CD4-positive, alpha-beta memory T cell (primary cell): ENCODE measurements at regions of chr15 and their contacts with region 1.

Region 1: GRCh38 chr15:101294731-101295606 is at the start of gene SNRPA1:
- DNase-seq: peak; percentile 94 to 97 (median 95)
- H3K4me3 ChIP-seq: peak within 1 kb of the TSS; percentile 93 to 96
- H3K4me3 Mint-ChIP-seq: peak within 1 kb of the TSS; percentile 93 to 99 (median 96)
- H3K27ac ChIP-seq: peak within 1 kb of the TSS; percentile 94
- H3K27ac Mint-ChIP-seq: peak within 1 kb of the TSS; percentile 89 to 99 (median 98)
- H3K4me1 ChIP-seq: peaks cover 47% of the 10 kb centered on the region
- H3K4me1 Mint-ChIP-seq: peaks cover 26 to 57% (median 39%) of the 10 kb centered on the region in 4 donors
- H3K27me3 ChIP-seq: no peaks in the 10 kb centered on the region
- H3K27me3 Mint-ChIP-seq: no peaks in the 10 kb centered on the region
- total RNA-seq, gene SNRPA1: 90.5 to 100 TPM

Region 2: DNA sequence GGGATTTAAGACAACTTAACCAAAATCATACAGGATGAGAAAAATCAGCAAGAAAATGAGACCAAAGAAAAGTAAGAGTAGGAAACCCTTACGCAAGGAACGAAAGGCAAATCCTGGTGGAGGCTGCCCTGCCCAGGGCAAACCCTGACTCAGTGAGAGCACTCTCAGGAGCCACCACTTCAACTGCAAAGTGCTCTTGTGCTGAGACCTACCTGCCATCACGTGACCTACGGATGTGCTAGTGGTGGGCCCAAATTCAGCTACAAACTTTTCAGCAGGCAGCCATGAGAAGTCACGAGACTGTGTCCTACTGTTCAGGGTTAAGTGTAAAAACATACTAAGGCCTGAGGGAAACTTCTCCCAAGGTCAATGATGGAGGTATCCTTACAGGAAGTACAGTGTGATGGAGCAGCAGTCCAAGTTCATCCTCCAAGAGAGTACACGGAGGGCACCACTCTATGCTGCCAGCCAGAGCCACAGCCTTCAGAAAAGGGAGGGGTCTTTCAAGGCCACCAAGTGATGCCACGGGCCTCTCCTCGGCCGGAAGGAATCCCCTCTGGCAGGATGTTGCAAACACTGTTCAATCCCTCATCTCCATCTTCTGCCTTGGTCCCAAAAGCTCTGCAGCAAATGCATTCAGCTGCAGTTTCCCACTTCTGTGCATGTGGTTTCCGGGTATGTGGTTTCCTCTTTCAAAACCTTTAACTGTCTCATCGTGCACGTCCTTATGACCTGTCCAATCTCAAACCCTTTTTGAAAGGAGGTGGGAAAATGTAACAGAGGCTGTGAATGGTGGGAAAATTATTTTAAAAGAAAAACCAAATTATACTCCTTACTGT is 52.6 kb before region 1 on chr15:
- CTCF ChIA-PET with region 1: interaction called, 4 read pairs
- POLR2A ChIA-PET with region 1: interaction called, 15 read pairs
- intact Hi-C with region 1: no loop called
- DNase-seq: peak; percentile 78 to 88 (median 80)
- H3K4me3 ChIP-seq: peak overlapping the region in 1 of 2 donors; percentile 57
- H3K4me3 Mint-ChIP-seq: peak overlapping the region; percentile 64 to 89 (median 80)
- H3K27ac ChIP-seq: peak overlapping the region; percentile 49
- H3K27ac Mint-ChIP-seq: peak overlapping the region; percentile 82 to 97 (median 89)
- H3K4me1 ChIP-seq: peaks cover 87% of the 10 kb centered on the region
- H3K4me1 Mint-ChIP-seq: peaks cover 67 to 96% (median 78%) of the 10 kb centered on the region in 4 donors
- H3K27me3 ChIP-seq: no peaks in the 10 kb centered on the region
- H3K27me3 Mint-ChIP-seq: no peaks in the 10 kb centered on the region

Region 3: GRCh38 chr15:101269479-101270223 is 25.3 kb before region 1 on chr15:
- CTCF ChIA-PET with region 1: interaction called, 27 read pairs
- POLR2A ChIA-PET with region 1: interaction called, 10 read pairs
- intact Hi-C with region 1: no loop called
- DNase-seq: no peak
- H3K4me3 ChIP-seq: no peak overlapping the region
- H3K4me3 Mint-ChIP-seq: no peak overlapping the region
- H3K27ac ChIP-seq: no peak overlapping the region
- H3K27ac Mint-ChIP-seq: peak overlapping the region in 3 of 7 donors; percentile 36 to 51 (median 43)
- H3K4me1 ChIP-seq: no peaks in the 10 kb centered on the region
- H3K4me1 Mint-ChIP-seq: peaks cover 0 to 6% (median 0%) of the 10 kb centered on the region in 4 donors
- H3K27me3 ChIP-seq: no peaks in the 10 kb centered on the region
- H3K27me3 Mint-ChIP-seq: no peaks in the 10 kb centered on the region

Region 4: GRCh38 chr15:101320501-101321052 is 25.6 kb after region 1 on chr15:
- CTCF ChIA-PET with region 1: interaction called, 23 read pairs
- POLR2A ChIA-PET with region 1: interaction called, 56 read pairs
- intact Hi-C with region 1: loop called (anchors 1 kb)
- DNase-seq: peak; percentile 51 to 67 (median 64)
- H3K4me3 ChIP-seq: peak overlapping the region; percentile 19 to 34
- H3K4me3 Mint-ChIP-seq: peak overlapping the region; percentile 72 to 89 (median 86)
- H3K27ac ChIP-seq: no peak overlapping the region
- H3K27ac Mint-ChIP-seq: peak overlapping the region; percentile 41 to 96 (median 87)
- H3K4me1 ChIP-seq: peaks cover 11% of the 10 kb centered on the region
- H3K4me1 Mint-ChIP-seq: peaks cover 6 to 14% (median 10%) of the 10 kb centered on the region in 4 donors
- H3K27me3 ChIP-seq: no peaks in the 10 kb centered on the region
- H3K27me3 Mint-ChIP-seq: peaks cover 3 to 5% of the 10 kb centered on the region in 2 donors

Region 5: DNA sequence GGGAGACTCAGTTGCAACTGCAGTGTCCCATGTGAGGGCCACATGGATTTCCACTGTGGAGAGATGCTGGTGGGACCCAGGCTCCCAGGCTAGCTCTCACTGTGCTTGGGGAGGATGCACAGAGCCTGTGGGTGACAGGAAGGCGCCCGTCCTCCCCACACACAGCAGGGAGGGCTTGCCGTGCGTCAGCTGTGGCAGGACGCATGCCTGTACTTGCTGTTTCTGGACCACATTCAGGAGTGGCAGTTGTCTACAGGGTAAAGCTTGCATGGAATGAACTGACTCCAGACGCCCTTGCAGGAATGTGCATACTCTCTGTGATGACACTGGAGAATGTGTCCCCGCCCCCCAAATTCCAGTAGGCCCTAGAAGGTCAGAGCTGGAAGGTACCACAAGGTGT is 63.9 kb after region 1 on chr15:
- CTCF ChIA-PET with region 1: no interaction called
- POLR2A ChIA-PET with region 1: no interaction called
- intact Hi-C with region 1: no loop called
- DNase-seq: no peak
- H3K4me3 ChIP-seq: no peak overlapping the region
- H3K4me3 Mint-ChIP-seq: no peak overlapping the region
- H3K27ac ChIP-seq: no peak overlapping the region
- H3K27ac Mint-ChIP-seq: no peak overlapping the region
- H3K4me1 ChIP-seq: no peaks in the 10 kb centered on the region
- H3K4me1 Mint-ChIP-seq: no peaks in the 10 kb centered on the region
- H3K27me3 ChIP-seq: no peaks in the 10 kb centered on the region
- H3K27me3 Mint-ChIP-seq: peaks cover 14 to 17% of the 10 kb centered on the region in 2 donors

Region 6: DNA sequence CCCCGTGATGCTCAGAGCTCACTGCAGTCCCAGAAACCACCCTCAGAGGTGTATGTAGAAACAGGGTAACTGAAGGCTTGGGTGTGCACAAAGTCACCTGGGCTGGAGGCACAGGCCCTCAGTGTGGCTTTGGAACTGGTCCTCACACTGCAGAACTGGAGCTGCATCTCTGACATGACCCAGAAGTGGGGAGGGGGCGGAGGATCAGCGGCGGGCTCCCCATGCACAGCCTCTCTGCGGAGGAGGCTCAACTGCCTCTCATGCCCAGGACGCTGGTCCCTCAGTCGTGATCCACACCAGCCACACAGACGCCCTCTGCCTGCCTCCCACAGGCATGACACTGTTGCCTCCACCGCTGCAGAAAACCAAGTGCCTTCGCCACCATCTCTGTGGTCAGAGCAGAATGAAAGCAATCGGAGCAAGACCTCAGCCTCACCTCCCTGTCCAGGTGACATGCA is 283.5 kb after region 1 on chr15:
- CTCF ChIA-PET with region 1: no interaction called
- POLR2A ChIA-PET with region 1: no interaction called
- intact Hi-C with region 1: no loop called
- DNase-seq: peak in 1 of 5 donors; percentile 1
- H3K4me3 ChIP-seq: no peak overlapping the region
- H3K4me3 Mint-ChIP-seq: no peak overlapping the region
- H3K27ac ChIP-seq: no peak overlapping the region
- H3K27ac Mint-ChIP-seq: no peak overlapping the region
- H3K4me1 ChIP-seq: no peaks in the 10 kb centered on the region
- H3K4me1 Mint-ChIP-seq: no peaks in the 10 kb centered on the region
- H3K27me3 ChIP-seq: no peaks in the 10 kb centered on the region
- H3K27me3 Mint-ChIP-seq: peaks cover 22 to 48% of the 10 kb centered on the region in 2 donors

Region 7: DNA sequence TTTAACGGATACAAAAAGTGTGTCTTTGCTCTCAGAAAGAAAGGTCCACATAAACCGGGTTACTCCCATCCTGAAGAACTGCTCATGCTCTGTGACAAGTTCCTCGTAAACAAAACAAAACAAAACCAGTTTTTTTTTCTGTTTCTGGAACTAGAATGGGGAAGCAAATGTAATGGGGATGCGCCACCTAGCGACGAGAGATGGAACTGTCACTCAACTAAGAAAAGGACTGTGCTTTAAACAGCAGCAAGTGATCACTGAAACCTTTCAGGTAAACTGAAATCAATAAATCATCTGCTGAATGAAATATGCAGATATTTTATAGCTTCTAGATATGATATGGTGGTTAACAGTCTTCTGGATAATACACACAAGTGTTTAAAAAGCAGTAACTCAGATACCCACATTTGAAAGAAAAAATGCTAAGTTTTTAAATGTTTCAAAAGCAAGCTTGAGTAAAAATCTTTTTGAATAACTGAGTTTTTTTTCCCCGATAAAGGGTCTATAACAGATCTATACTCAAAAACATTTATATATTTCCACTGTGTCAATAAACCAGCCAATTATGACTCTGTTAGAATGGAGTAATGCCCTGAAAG is 346.3 kb after region 1 on chr15:
- CTCF ChIA-PET with region 1: interaction called, 50 read pairs
- POLR2A ChIA-PET with region 1: interaction called, 13 read pairs
- intact Hi-C with region 1: loop called (anchors 1 kb)
- DNase-seq: peak; percentile 73 to 78 (median 77)
- H3K4me3 ChIP-seq: no peak overlapping the region
- H3K4me3 Mint-ChIP-seq: peak overlapping the region in 5 of 8 donors; percentile 4 to 52 (median 18)
- H3K27ac ChIP-seq: peak overlapping the region; percentile 67
- H3K27ac Mint-ChIP-seq: peak overlapping the region; percentile 80 to 95 (median 94)
- H3K4me1 ChIP-seq: peaks cover 25% of the 10 kb centered on the region
- H3K4me1 Mint-ChIP-seq: peaks cover 20 to 30% (median 25%) of the 10 kb centered on the region in 4 donors
- H3K27me3 ChIP-seq: no peaks in the 10 kb centered on the region
- H3K27me3 Mint-ChIP-seq: no peaks in the 10 kb centered on the region

Region 8: DNA sequence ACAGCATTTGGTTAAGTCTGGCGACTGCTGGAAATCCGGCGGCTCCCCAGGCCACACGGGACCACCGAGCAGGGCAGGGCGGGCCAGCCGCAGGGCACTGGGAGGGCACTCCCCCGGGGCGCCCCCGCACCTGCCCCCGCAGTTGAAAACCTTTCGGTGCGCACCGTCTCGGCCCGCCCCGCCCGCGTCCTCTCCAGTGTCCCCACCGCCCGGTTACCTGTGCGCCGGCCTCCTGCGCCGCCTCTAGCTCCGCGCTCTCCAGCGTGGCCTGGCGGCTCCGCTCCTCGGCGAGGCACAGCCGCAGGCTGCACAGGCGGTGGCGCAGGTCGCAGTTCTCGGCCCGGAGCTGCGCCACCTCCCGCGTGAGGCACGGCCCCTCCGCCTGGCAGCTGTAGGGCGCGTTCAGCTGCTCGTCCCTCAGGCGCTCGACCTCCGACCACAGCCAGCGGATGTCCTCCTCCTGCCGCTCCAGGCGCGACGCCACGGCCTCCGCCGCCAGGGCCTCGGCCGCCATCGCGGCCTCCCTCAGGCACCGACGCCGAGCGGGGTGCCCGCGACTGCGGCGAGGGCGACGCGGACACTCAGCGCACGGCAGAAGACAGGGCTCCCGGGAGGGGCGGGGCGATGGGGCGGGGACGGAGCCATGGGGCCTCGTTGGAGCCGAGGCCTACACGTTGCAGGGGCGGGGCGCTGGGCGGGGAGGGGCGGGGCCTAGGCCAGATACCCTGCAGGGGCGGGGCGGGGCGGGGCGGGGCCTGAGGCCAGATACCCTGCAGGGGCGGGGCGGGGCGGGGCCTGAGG is 429.1 kb after region 1 on chr15 and contains the start of gene TARS3:
- CTCF ChIA-PET with region 1: no interaction called
- POLR2A ChIA-PET with region 1: interaction called, 29 read pairs
- intact Hi-C with region 1: loop called (anchors 1 kb)
- DNase-seq: peak; percentile 90 to 97 (median 90)
- H3K4me3 ChIP-seq: peak within 1 kb of the TSS; percentile 45 to 76
- H3K4me3 Mint-ChIP-seq: peak within 1 kb of the TSS; percentile 83 to 97 (median 92)
- H3K27ac ChIP-seq: peak within 1 kb of the TSS; percentile 75
- H3K27ac Mint-ChIP-seq: peak within 1 kb of the TSS; percentile 87 to 95 (median 91)
- H3K4me1 ChIP-seq: peaks cover 22% of the 10 kb centered on the region
- H3K4me1 Mint-ChIP-seq: peaks cover 17 to 43% (median 30%) of the 10 kb centered on the region in 4 donors
- H3K27me3 ChIP-seq: no peaks in the 10 kb centered on the region
- H3K27me3 Mint-ChIP-seq: no peaks in the 10 kb centered on the region
- total RNA-seq, gene TARS3: 35.8 to 39.8 TPM